PC-9 (cell line): ENCODE measurements at regions of chr9 and their contacts with region 1.

Region 1: DNA sequence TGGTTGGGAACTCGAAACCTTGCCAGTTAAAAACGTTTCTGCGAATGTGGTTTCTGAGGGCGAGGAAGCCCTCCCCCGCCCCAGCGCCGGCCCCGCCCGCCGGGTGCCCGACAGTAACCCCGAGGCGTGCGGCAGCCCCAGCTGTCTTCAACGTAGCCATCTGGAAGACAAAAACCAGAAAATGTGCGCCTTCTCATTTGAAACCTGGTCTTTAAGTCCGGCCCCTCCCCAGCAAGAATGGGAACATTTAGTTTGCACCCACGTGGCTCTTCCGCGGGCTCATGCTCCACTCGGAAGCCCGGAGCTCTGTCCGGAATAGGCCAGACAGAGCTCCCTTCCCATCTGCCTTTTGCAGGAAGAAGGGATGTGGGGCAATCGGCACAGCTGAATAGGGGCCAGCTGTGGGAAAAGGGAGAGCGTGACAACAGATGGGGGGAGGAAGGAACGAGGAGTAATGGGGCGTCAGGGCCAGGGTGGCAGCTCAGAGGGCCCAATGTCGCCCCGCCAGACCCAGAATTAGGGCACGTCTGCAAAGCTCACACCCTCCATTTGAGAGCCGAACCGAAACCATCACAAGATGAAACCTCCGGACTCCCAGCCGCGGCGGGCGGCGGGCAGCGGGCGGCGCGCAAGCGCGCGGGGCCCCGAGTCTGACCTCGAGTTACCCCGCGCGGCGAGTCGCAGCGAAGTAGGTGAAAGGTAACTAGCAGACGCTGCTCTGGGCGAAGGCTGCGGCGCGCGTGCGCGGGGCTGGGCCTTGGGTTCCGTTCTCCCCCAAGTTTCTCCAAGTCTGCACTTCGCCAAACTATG is 63.4 kb upstream of the ABCA1 start:
- DNase-seq: peak; percentile 75 to 88
- H3K4me3 ChIP-seq: peak overlapping the region; percentile 84
- H3K27ac ChIP-seq: peak overlapping the region; percentile 99
- H3K4me1 ChIP-seq: peaks cover 52% of the 10 kb centered on the region
- H3K27me3 ChIP-seq: no peaks in the 10 kb centered on the region
- CTCF ChIP-seq: no peak

Region 2: GRCh38 chr9:104780799-104781395 is 210.5 kb before region 1 on chr9:
- CTCF ChIA-PET with region 1: no interaction called
- POLR2A ChIA-PET with region 1: no interaction called
- intact Hi-C with region 1: no loop called
- DNase-seq: peak in 1 of 2 experiments; percentile 43
- H3K4me3 ChIP-seq: no peak overlapping the region
- H3K27ac ChIP-seq: no peak overlapping the region
- H3K4me1 ChIP-seq: no peaks in the 10 kb centered on the region
- H3K27me3 ChIP-seq: no peaks in the 10 kb centered on the region
- CTCF ChIP-seq: peak; percentile 66

Region 3: GRCh38 chr9:104795082-104795481 is 196.3 kb before region 1 on chr9:
- CTCF ChIA-PET with region 1: no interaction called
- POLR2A ChIA-PET with region 1: no interaction called
- intact Hi-C with region 1: no loop called
- DNase-seq: no peak
- H3K4me3 ChIP-seq: no peak overlapping the region
- H3K27ac ChIP-seq: no peak overlapping the region
- H3K4me1 ChIP-seq: no peaks in the 10 kb centered on the region
- H3K27me3 ChIP-seq: no peaks in the 10 kb centered on the region
- CTCF ChIP-seq: no peak

Region 4: GRCh38 chr9:104868687-104869404 is 122.5 kb before region 1 on chr9:
- CTCF ChIA-PET with region 1: no interaction called
- POLR2A ChIA-PET with region 1: interaction called, 12 read pairs
- intact Hi-C with region 1: loop called (anchors 2 kb)
- DNase-seq: peak; percentile 72 to 85
- H3K4me3 ChIP-seq: peak overlapping the region; percentile 20; the same call in 1 of the 2 replicates
- H3K27ac ChIP-seq: peak overlapping the region; percentile 90
- H3K4me1 ChIP-seq: peaks cover 87% of the 10 kb centered on the region
- H3K27me3 ChIP-seq: no peaks in the 10 kb centered on the region
- CTCF ChIP-seq: no peak

Region 5: GRCh38 chr9:104977615-104978014 is 13.7 kb before region 1 on chr9:
- CTCF ChIA-PET with region 1: no interaction called
- POLR2A ChIA-PET with region 1: no interaction called
- intact Hi-C with region 1: loop called (anchors 1 kb)
- DNase-seq: peak in 1 of 2 experiments; percentile 96
- H3K4me3 ChIP-seq: no peak overlapping the region
- H3K27ac ChIP-seq: peak overlapping the region; percentile 78
- H3K4me1 ChIP-seq: peaks cover 38% of the 10 kb centered on the region
- H3K27me3 ChIP-seq: no peaks in the 10 kb centered on the region
- CTCF ChIP-seq: no peak

Region 6: DNA sequence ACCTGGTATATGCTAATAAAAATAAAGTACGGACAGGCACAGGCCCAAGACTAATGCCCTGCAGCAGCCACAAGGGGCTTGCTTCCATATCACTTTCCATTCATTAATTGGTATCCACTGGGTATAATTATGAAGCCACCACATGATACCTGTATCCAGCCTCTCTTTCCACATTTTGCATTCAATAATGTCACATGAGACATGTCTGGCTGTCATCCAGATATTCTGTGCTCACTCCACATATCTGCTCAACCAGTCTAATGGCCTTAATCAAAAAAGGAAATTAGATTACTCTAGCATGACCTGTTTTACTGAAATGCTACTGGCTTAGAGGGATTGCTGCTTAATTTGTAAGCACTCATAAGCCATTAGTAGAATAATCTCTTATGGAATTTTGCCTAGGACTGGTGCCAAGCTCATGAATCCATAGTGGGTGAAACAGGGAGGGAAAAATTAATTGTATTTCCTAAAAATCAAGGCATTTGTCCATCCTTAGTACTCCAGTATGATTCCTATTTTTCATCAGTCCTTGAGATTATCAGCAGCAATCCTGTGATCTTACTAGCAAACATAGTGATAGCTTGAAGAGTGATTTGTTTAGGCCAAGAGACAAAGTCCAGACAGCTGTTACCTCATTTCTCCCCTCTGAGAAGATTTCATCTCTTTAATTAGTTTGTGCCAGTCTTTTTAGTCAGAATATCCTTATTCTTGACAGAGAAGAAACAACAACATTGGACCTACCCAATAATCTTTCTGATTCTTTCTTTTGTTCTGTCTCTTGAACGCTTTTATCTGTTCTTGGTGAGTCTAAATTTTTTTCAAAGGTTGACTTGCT is 55.8 kb after region 1 on chr9:
- CTCF ChIA-PET with region 1: no interaction called
- POLR2A ChIA-PET with region 1: no interaction called
- intact Hi-C with region 1: no loop called
- DNase-seq: no peak
- H3K4me3 ChIP-seq: no peak overlapping the region
- H3K27ac ChIP-seq: no peak overlapping the region
- H3K4me1 ChIP-seq: no peaks in the 10 kb centered on the region
- H3K27me3 ChIP-seq: no peaks in the 10 kb centered on the region
- CTCF ChIP-seq: no peak

Region 7: DNA sequence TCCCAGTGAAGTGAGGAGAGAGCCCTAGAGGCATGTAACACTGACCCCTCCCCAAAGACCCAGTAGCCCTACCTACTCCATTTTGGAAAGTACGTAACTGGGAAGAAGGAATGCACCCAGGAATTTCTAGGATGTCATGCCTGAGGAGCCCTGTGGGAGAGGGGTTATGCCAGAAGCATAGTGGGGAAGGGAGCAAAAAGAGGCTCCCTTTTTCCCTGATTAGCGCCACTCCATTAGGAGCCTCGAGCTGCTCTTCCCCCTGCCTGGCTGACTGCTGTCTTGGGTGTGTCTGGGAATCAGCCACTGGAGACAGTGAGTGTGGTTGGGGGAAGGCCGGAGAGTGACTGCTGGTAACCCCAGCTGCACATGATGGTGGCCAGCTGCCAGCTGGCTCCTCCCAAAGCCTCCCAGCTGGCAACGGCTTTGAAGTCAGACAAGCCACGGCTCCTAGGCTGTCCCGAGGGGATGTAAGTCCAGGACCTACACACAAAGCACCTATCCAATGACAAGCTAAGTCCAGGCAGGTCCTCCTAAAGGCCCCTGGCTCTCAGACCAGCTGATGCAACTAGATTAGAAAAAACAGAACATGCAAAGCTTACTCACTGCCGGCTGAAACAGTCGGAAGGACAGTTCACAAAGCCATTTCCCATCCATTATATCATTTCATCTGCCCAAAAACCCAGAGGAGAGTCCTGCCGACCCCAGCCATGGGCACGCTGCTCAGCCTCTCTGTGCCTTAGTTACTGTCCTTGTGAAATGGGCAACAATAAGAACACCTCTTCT is 73.2 kb after region 1 on chr9:
- CTCF ChIA-PET with region 1: no interaction called
- POLR2A ChIA-PET with region 1: interaction called, 6 read pairs
- intact Hi-C with region 1: loop called (anchors 1 kb)
- DNase-seq: peak; percentile 93 to 94
- H3K4me3 ChIP-seq: peak overlapping the region; percentile 36; the same call in 1 of the 2 replicates
- H3K27ac ChIP-seq: peak overlapping the region; percentile 97
- H3K4me1 ChIP-seq: peaks cover 43% of the 10 kb centered on the region
- H3K27me3 ChIP-seq: no peaks in the 10 kb centered on the region
- CTCF ChIP-seq: no peak

Region 8: DNA sequence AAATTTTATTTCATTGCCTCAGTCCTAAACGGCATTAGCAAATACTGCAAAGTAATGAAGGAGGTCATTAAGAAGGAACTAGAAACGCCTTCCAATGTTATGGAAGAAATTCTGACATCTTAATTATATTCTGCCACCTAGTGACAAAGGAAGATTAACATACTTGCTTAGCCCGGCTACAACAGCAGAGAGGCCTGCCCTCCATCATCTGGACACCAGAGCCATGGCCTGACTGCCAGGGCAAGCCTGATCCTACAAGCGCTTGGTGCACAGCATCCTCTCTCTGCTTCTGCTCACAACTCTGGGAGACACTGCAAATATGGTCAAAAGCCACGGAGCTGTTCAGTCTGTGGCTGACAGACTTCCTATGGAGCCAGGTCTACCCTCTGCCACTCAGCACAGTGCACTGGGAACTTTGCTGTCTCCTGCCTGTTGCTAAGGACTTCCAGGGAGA is 165.8 kb after region 1 on chr9:
- CTCF ChIA-PET with region 1: no interaction called
- POLR2A ChIA-PET with region 1: no interaction called
- intact Hi-C with region 1: loop called (anchors 2 kb)
- DNase-seq: peak; percentile 52 to 71
- H3K4me3 ChIP-seq: no peak overlapping the region
- H3K27ac ChIP-seq: no peak overlapping the region
- H3K4me1 ChIP-seq: peaks cover 24% of the 10 kb centered on the region
- H3K27me3 ChIP-seq: no peaks in the 10 kb centered on the region
- CTCF ChIP-seq: peak; percentile 71